ENCODE measurements at regions of chr3 and their contacts with region 1.

Region 1: DNA sequence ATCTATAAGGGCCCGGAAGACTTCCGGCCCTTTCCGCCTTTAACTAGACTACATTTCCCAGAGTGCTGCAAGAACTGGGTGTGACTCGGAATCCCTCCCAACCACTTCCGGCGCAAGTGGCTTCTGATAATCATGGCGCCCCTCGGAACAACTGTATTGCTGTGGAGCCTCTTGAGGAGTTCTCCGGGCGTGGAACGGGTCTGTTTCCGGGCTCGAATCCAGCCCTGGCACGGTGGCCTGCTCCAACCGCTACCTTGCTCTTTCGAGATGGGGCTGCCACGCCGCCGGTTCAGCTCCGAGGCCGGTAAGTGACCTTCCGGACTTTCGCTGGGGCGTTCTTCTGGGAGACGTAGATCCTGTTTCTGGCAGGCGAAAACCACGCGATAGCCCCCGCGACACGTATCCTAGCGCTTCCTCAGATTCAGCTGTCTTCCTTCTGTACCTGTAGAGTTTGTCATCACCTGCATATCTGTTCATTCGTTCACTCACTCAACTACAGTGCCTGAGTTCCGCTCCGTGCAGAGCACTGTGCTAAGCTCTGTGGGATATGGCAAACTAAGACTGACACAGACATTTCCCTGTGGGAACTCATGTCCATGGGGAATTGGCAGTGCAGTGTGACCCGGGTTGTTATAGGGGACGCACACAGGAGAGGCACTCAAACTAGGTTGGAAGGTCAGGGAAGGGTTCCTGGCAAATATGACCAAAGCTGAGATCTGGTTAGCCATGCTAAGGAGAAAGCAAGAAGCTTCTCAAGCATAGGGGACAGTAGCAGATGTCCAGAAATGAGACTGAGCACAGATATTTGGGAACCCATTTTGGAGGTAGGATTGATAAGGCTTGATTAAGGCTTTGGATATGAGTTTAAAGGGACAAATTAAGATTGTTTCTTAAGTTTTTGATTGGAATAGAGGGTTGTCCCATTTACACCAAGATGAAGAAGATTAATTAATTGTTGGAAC is at the start of gene MRPS22:
- DNase-seq: peak; percentile 90
- H3K4me3 Mint-ChIP-seq: no peak within 1 kb of the TSS
- H3K27ac Mint-ChIP-seq: no peak within 1 kb of the TSS
- H3K4me1 Mint-ChIP-seq: peaks cover 10% of the 10 kb centered on the region
- H3K27me3 Mint-ChIP-seq: no peaks in the 10 kb centered on the region
- total RNA-seq, gene MRPS22: 49.9 to 50.2 TPM

Region 2: DNA sequence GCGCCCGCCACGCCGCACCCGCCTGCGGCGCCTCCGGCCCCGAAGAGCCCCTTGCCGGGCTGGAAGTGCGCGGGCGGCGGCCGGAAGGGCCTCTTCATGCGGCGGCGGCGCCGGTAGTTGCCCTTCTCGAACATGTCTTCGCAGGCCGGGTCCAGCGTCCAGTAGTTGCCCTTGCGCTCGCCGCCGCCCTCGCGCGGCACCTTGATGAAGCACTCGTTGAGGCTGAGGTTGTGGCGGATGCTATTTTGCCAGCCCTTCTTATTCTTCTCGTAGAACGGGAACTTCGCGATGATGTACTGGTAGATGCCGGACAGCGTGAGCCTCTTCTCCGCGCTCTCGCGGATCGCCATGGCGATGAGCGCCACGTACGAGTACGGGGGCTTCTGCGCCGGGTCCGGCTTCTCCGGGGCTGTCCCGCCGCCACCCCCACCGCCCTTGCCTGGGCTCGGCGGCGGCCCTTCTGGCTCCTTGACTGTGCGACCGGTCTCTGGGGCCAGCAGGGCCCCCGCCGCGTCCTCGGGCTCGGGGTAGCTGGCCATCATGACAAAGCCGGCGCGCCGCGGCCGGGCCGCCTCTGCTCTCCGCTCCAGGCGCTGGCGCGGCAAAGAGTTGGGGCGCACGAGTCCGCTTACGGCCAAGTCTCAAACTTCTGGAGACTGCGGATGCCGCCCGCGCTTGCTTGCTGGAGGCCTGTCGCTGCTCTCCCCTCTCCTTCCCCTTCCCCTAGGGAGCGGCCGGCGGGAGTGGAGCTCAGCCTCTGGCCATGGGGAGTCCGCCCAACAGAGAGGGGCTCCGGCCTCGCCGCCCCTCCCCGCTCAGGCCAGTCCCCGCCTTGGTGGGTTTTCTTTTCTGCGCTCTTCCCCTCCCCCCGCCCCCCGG is 397.8 kb before region 1 on chr3:
- CTCF ChIA-PET with region 1: no interaction called
- POLR2A ChIA-PET with region 1: no interaction called
- intact Hi-C with region 1: no loop called
- DNase-seq: peak; percentile 46
- H3K4me3 Mint-ChIP-seq: peak overlapping the region; percentile 60
- H3K27ac Mint-ChIP-seq: no peak overlapping the region
- H3K4me1 Mint-ChIP-seq: peaks cover 40% of the 10 kb centered on the region
- H3K27me3 Mint-ChIP-seq: peaks cover 78% of the 10 kb centered on the region

Region 3: GRCh38 chr3:139329345-139329850 is 14.8 kb before region 1 on chr3:
- CTCF ChIA-PET with region 1: interaction called, 10 read pairs
- POLR2A ChIA-PET with region 1: no interaction called
- intact Hi-C with region 1: no loop called
- DNase-seq: peak; percentile 93
- H3K4me3 Mint-ChIP-seq: peak overlapping the region; percentile 41
- H3K27ac Mint-ChIP-seq: no peak overlapping the region
- H3K4me1 Mint-ChIP-seq: peaks cover 3% of the 10 kb centered on the region
- H3K27me3 Mint-ChIP-seq: peaks cover 23% of the 10 kb centered on the region

Region 4: DNA sequence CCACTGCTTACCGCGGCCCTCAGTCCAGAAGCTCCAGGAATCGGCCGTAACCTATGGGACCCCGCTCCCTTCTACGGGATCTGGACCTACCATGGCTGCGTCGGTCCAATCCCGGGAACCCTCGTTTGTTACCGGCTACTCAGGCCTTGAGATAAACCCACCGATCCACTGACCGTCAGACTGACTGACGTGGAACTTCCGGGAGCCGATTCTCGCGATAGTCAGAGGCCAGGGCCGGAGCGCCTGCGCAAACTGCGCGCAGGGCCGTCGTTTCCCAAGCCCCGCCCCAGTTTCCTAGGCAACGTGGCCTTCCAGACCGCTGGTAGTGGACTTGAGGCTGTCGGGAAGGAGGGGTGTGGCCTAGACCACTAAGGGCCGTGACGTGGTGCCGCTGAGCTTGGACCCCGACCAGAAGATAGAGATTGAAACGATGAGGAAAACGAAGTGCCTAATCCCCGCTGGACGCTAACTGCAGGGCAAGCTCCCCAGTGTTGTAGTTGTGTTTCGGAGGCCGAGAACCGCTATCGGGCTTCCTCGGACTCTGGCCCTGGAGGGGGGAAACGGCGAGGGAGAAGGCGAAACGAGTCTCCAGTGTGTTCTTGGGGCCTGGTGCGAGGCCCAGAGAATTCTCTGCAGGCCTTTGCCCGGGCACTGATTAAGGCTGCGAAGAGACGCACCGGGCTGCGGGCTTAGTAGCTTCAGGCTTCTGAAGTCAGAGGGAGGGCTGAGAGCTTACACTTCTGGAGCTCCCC is 45.5 kb after region 1 on chr3 and contains the start of gene COPB2:
- CTCF ChIA-PET with region 1: no interaction called
- POLR2A ChIA-PET with region 1: interaction called, 6 read pairs
- intact Hi-C with region 1: loop called (anchors 1 kb)
- DNase-seq: peak; percentile 98
- H3K4me3 Mint-ChIP-seq: peak within 1 kb of the TSS; percentile 92
- H3K27ac Mint-ChIP-seq: peak within 1 kb of the TSS; percentile 91
- H3K4me1 Mint-ChIP-seq: peaks cover 39% of the 10 kb centered on the region
- H3K27me3 Mint-ChIP-seq: no peaks in the 10 kb centered on the region
- total RNA-seq, gene COPB2: 104 TPM

Measured in activated CD4-positive, alpha-beta memory T cell treated with anti-CD3 and anti-CD28 coated beads for 36 hours (primary cell).